Thyroid gland (tissue), 4 donors: ENCODE measurements at regions of chr10 and their contacts with region 1.

Region 1: DNA sequence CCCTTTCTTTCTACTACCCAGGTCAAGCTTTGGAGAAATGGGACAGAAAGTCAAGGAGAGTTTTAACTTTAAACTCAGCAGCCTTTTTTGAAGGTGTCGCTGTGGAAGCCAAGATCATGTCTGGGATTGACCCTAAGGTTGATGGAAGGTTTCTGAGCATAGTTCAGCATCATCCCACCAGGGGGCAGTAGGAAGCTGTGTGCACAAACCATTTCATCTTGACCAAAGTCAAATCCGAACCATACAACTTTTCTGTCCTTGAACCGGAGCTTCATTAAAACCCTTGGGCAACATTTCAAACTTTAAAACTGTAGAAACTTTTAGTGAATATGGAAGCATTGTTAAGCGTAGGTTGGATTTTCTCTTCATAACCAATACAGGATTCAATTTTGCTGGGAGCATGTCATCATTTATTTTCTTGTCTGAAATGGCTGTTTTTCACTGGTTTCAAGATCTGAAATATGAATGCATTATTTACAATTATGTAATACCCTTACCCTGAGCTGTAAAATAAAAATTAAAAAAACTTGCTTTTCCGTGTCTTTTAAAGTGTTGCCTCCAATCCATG is 214.4 kb upstream of the KIAA1217 start:
- DNase-seq: peak; percentile 77 to 78
- H3K4me3 ChIP-seq: no peak overlapping the region
- H3K27ac ChIP-seq: peak overlapping the region in 1 of 3 donors; percentile 43
- H3K4me1 ChIP-seq: peaks cover 7 to 10% of the 10 kb centered on the region in 2 donors
- H3K27me3 ChIP-seq: no peaks in the 10 kb centered on the region
- CTCF ChIP-seq: peak; percentile 81 to 97 (median 87)
- POLR2A ChIP-seq: no peak

Region 2: DNA sequence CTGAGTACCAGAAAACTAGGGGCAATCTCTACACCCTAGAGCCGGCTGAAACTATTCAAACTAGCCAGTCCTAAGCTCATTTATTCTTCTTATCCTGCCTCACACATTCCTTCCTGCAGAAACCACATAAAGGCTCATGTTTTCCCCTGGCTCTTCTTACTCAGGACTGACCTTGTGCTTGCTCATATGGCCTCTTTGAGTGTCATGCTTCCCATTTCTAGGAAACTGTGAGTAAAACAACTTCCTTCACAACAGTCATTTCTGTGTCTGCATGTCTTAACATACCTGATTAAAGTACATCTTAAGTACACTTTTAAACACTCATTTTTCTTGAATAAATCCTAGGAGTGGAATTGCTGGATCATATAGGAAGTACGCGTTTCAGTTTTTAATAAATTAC is 162.1 kb after region 1 on chr10:
- intact Hi-C with region 1: no loop called
- DNase-seq: no peak
- H3K4me3 ChIP-seq: no peak overlapping the region
- H3K27ac ChIP-seq: no peak overlapping the region
- H3K4me1 ChIP-seq: peaks cover 8 to 17% of the 10 kb centered on the region in 2 donors
- H3K27me3 ChIP-seq: no peaks in the 10 kb centered on the region
- CTCF ChIP-seq: no peak
- POLR2A ChIP-seq: no peak

Region 3: GRCh38 chr10:24193330-24193729 is 198.8 kb after region 1 on chr10:
- intact Hi-C with region 1: loop called (anchors 5 kb)
- DNase-seq: no peak
- H3K4me3 ChIP-seq: no peak overlapping the region
- H3K27ac ChIP-seq: no peak overlapping the region
- H3K4me1 ChIP-seq: peaks cover 8 to 16% of the 10 kb centered on the region in 2 donors
- H3K27me3 ChIP-seq: no peaks in the 10 kb centered on the region
- CTCF ChIP-seq: no peak
- POLR2A ChIP-seq: no peak

Region 4: GRCh38 chr10:24518981-24519597 is 524.5 kb after region 1 on chr10:
- intact Hi-C with region 1: loop called (anchors 10 kb)
- DNase-seq: peak; percentile 74 to 82
- H3K4me3 ChIP-seq: no peak overlapping the region
- H3K27ac ChIP-seq: peak overlapping the region in 2 of 3 donors; percentile 56 to 72
- H3K4me1 ChIP-seq: peaks cover 6 to 7% of the 10 kb centered on the region in 2 donors
- H3K27me3 ChIP-seq: no peaks in the 10 kb centered on the region
- CTCF ChIP-seq: peak; percentile 55 to 84 (median 72)
- POLR2A ChIP-seq: no peak